ENCODE measurements at regions of chrX and their contacts with region 1.

Region 1: GRCh38 chrX:107776649-107777535 is 641 bp upstream of the NCBP2L start:
- DNase-seq: peak; percentile 47
- ATAC-seq: peak; percentile 75
- H3K4me3 Mint-ChIP-seq: peak overlapping the region; percentile 89
- H3K27ac Mint-ChIP-seq: peak overlapping the region; percentile 87
- H3K4me1 Mint-ChIP-seq: peaks cover 9% of the 10 kb centered on the region
- H3K27me3 Mint-ChIP-seq: peaks cover 10% of the 10 kb centered on the region

Region 2: DNA sequence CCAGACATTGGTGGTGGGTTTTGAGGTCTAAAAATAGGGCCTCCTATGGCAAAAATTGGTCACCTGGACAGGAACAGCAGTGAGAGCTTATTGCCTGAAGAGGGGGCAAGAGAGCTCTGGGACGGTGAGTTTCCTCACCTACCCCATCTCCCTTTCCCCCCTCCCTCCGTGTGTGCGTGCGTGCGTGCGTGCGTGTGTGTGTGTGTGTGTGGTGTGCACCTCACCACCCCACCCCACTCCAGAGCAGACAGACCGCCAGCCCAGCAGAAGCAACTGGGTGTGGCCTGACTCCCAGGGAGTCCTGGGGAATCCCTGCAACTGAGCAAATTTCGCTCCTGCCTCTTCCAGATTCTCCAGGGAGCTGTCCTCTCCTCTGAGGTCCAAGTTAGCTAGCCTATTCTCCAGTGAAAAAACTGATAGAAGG is 103.9 kb before region 1 on chrX:
- POLR2A ChIA-PET with region 1: interaction called, 31 read pairs
- DNase-seq: peak; percentile 66
- ATAC-seq: peak; percentile 44
- H3K4me3 Mint-ChIP-seq: peak overlapping the region; percentile 74
- H3K27ac Mint-ChIP-seq: peak overlapping the region; percentile 96
- H3K4me1 Mint-ChIP-seq: peaks cover 34% of the 10 kb centered on the region
- H3K27me3 Mint-ChIP-seq: no peaks in the 10 kb centered on the region

Region 3: GRCh38 chrX:107710617-107711391 is 66.1 kb before region 1 on chrX:
- POLR2A ChIA-PET with region 1: no interaction called
- DNase-seq: no peak
- ATAC-seq: peak; percentile 80
- H3K4me3 Mint-ChIP-seq: peak overlapping the region; percentile 73
- H3K27ac Mint-ChIP-seq: peak overlapping the region; percentile 94
- H3K4me1 Mint-ChIP-seq: peaks cover 21% of the 10 kb centered on the region
- H3K27me3 Mint-ChIP-seq: no peaks in the 10 kb centered on the region